Naive thymus-derived CD4-positive, alpha-beta T cell (primary cell): ENCODE measurements at regions of chr12 and their contacts with region 1.

Region 1: GRCh38 chr12:106736051-106736957 is 38.2 kb upstream of the RIC8B start:
- DNase-seq: peak in 7 of 9 donors; percentile 18 to 41 (median 32)
- ATAC-seq: peak; percentile 67
- H3K4me3 ChIP-seq: no peak overlapping the region
- H3K4me3 Mint-ChIP-seq: no peak overlapping the region
- H3K27ac ChIP-seq: no peak overlapping the region
- H3K27ac Mint-ChIP-seq: peak overlapping the region in 1 of 9 donors; percentile 4
- H3K4me1 ChIP-seq: no peaks in the 10 kb centered on the region
- H3K4me1 Mint-ChIP-seq: peaks cover 0 to 8% (median 5%) of the 10 kb centered on the region in 7 donors
- H3K27me3 ChIP-seq: no peaks in the 10 kb centered on the region
- H3K27me3 Mint-ChIP-seq: peaks cover 0 to 18% (median 0%) of the 10 kb centered on the region in 5 donors

Region 2: DNA sequence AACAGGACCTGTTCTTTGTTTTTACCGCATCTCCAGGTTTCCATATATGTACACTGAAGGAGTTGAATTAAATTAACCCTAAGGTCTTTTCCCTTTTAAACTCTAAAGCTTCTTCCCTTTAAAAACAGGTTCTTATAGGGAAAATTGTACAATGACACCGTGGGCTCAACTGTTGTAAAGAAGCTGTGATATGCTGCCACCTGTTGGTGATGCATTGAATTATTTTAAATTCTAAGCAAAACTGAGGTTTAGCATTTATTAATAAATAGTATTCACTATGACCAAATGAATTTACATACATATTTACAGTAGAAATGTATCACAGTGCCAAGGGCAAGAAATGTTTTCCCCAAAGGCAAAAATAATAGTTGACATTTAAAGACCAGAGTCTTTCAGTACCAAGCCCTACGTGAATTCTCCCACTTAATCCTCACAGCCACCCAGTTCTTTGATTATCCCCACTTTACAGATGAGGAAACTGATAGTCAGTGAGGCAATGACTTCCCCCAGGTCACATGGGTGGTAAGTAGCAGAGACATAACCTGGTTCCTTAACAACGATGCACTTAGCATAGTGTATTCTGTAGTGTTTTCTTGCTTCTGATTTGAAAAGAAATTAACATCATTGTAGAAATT is 183.7 kb after region 1 on chr12:
- CTCF ChIA-PET with region 1: no interaction called
- POLR2A ChIA-PET with region 1: no interaction called
- intact Hi-C with region 1: loop called (anchors 1 to 2 kb)
- DNase-seq: peak in 7 of 9 donors; percentile 12 to 53 (median 32)
- ATAC-seq: peak; percentile 60
- H3K4me3 ChIP-seq: no peak overlapping the region
- H3K4me3 Mint-ChIP-seq: no peak overlapping the region
- H3K27ac ChIP-seq: no peak overlapping the region
- H3K27ac Mint-ChIP-seq: no peak overlapping the region
- H3K4me1 ChIP-seq: peaks cover 0 to under 1% of the 10 kb centered on the region in 2 donors
- H3K4me1 Mint-ChIP-seq: peaks cover 8 to 15% (median 9%) of the 10 kb centered on the region in 7 donors
- H3K27me3 ChIP-seq: no peaks in the 10 kb centered on the region
- H3K27me3 Mint-ChIP-seq: peaks cover 5 to 50% (median 14%) of the 10 kb centered on the region in 5 donors